Common myeloid progenitor, CD34-positive (primary cell): ENCODE measurements at regions of chr7 and their contacts with region 1.

Region 1: DNA sequence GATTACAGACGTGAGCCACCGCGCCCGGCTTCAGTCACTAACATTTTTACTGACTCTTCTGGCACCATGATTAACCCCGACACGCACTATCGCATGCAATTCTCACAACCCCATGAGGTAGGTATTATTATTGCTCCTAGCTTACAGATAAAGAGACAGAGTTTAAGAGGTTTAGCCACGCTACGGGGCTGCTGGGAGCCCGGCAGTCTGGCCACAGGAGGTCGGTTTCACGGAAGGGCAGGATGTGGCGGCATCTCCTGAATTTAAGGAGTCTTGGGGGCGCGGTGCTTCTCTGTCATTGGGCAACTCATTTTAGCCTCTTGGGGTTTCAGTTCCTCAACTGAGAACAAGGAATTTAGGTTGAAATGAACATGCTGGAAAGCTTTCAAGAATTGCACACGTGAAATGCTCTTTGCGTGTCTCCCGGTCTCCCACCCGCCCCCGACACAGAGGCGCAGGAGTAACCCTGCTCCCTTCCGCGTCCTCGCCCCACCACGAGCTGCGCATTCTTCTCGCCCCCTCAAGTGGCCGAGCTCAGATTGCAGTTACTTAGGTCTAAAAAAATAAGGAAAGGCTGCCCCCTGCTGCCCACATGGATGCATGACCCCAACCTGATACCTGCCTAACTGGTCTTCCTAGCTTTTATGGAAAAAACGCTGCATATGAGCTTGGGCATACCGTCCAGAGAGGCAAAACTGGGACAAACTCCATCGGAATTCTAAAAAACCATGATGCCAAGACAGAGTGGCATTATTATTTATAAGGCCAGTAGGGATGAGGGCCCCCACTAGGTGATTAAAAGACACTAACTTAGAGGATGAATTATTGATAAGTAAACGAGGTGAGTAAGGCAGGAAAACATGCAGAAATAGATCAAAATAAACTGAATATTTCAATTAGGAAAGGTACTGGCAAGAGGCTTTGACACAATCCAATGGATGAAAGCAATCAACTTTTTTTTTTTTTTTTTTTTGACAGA is 12.4 kb downstream of the PRSS2 start:
- DNase-seq: peak; percentile 95 to 98 (median 96)
- H3K4me3 ChIP-seq: peak overlapping the region in 6 of 7 experiments; percentile 3 to 69 (median 56)
- H3K27ac ChIP-seq: peak overlapping the region in 1 of 2 experiments; percentile 49
- H3K4me1 ChIP-seq: peaks cover 0 to 22% (median 13%) of the 10 kb centered on the region in 4 experiments
- H3K27me3 ChIP-seq: no peaks in the 10 kb centered on the region

Region 2: GRCh38 chr7:142603870-142604448 is 179.3 kb before region 1 on chr7:
- CTCF ChIA-PET with region 1: interaction called, 16 read pairs
- POLR2A ChIA-PET with region 1: no interaction called
- DNase-seq: peak; percentile 68 to 87 (median 83)
- H3K4me3 ChIP-seq: no peak overlapping the region
- H3K27ac ChIP-seq: no peak overlapping the region
- H3K4me1 ChIP-seq: peaks cover 0 to 29% (median 22%) of the 10 kb centered on the region in 4 experiments
- H3K27me3 ChIP-seq: no peaks in the 10 kb centered on the region

Region 3: DNA sequence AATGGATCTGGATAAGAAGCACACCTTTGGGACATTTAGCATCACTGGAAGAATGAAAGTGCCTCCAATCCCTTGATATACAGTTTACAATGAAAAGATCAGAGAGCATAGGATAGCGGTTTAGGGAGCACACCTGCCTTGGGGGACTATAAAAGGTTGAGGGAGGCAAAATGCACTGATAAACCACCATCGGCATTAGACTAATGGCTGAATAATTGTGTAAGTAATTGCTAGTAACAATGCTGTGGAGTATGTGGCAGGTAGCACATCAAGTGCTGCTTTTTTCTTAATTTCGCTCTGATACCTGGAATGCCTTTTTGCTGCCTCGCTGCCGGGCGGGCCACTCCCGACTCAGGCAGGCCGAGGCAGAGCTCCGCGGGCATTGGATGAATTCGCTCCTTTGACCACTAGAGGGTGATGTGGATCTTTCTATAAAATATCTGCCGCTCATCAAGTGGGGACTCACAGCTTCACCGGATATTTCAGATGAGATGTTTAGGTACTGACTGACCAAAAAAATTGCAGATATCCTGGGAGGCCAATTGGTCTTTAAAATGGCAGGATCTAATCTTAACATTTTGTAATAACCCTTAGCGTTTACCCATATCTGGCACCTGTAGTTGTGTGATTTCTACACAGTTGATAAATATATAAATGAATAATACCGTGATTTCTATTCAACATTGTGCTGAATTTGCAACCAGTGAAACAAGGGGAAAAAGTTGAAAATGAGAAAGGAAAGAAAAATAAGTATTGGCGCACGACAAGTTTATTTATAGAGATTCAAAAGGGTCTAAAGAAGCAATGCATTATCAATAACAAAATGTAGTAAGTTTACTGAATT is 150.7 kb before region 1 on chr7:
- CTCF ChIA-PET with region 1: interaction called, 179 read pairs
- POLR2A ChIA-PET with region 1: no interaction called
- DNase-seq: peak; percentile 81 to 88 (median 87)
- H3K4me3 ChIP-seq: peak overlapping the region in 1 of 7 experiments; percentile 11
- H3K27ac ChIP-seq: no peak overlapping the region
- H3K4me1 ChIP-seq: peaks cover 0 to 25% (median 13%) of the 10 kb centered on the region in 4 experiments
- H3K27me3 ChIP-seq: no peaks in the 10 kb centered on the region

Region 4: DNA sequence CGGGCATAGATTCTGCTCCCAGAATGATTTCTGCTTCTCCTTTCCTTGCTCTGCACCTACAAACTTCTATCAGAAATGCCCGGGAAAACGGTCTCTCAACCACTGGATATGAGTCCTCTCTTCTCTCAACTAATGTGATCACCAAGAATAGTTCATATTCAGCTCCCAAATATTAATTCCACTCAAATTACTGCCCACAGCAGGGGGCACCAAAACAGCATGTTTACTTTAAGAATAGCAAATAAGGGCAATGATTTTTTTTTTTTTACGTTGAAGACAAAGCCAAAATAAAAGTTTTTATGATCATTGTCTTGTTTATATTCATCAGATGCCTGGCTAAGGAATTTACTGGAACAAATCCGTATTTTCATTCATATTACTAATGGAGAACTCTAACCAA is 128.8 kb before region 1 on chr7:
- CTCF ChIA-PET with region 1: interaction called, 19 read pairs
- POLR2A ChIA-PET with region 1: no interaction called
- DNase-seq: peak in 2 of 3 donors; percentile 63 to 67
- H3K4me3 ChIP-seq: no peak overlapping the region
- H3K27ac ChIP-seq: no peak overlapping the region
- H3K4me1 ChIP-seq: no peaks in the 10 kb centered on the region
- H3K27me3 ChIP-seq: no peaks in the 10 kb centered on the region

Region 5: GRCh38 chr7:142689439-142690120 is 93.6 kb before region 1 on chr7:
- CTCF ChIA-PET with region 1: interaction called, 29 read pairs
- POLR2A ChIA-PET with region 1: no interaction called
- DNase-seq: peak in 2 of 3 donors; percentile 58 to 78
- H3K4me3 ChIP-seq: no peak overlapping the region
- H3K27ac ChIP-seq: peak overlapping the region in 1 of 2 experiments; percentile 34
- H3K4me1 ChIP-seq: peaks cover 0 to 21% (median 18%) of the 10 kb centered on the region in 4 experiments
- H3K27me3 ChIP-seq: no peaks in the 10 kb centered on the region

Region 6: GRCh38 chr7:142760071-142760642 is 23.1 kb before region 1 on chr7:
- CTCF ChIA-PET with region 1: no interaction called
- POLR2A ChIA-PET with region 1: no interaction called
- DNase-seq: no peak
- H3K4me3 ChIP-seq: no peak overlapping the region
- H3K27ac ChIP-seq: no peak overlapping the region
- H3K4me1 ChIP-seq: peaks cover 0 to 2% (median 0%) of the 10 kb centered on the region in 4 experiments
- H3K27me3 ChIP-seq: no peaks in the 10 kb centered on the region